WTC11 (cell line): ENCODE measurements at regions of chr11 and their contacts with region 1.

Region 1: DNA sequence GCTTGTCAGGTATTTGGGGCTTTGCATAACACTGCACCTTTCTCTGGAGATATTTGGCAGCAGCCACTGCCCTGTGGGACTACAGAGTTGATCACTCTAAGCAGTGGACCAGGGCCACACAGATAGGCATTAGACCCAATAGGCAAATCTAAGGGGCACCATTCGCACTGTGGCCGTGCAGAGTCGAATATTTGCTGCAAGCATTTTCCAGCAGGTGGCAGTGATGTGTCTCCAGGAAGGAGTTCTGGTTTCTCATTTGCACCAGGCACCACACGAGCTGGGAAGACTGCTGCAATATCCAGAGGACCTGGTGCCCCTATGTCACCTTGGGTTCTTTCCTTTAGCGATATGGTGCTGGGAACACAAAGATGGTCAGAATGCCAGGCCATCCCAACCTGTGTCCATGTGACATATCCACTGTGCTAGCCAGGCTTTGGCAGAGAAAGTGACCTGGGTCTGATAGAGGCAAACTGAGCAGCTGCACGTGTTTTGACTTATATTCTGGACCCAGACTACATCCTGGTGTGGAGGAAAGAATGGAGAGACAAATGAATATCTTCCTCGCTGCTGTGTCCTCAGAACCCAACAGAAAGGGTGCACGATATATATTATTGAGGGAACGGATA is 318.7 kb downstream of the BUD13 start:
- DNase-seq: peak; percentile 76
- ATAC-seq: peak; percentile 79
- H3K4me3 Mint-ChIP-seq: no peak overlapping the region
- H3K27ac Mint-ChIP-seq: no peak overlapping the region
- H3K4me1 Mint-ChIP-seq: peaks cover 51% of the 10 kb centered on the region
- H3K27me3 Mint-ChIP-seq: peaks cover 14% of the 10 kb centered on the region
- CTCF ChIP-seq: no peak; the same call in 1 of the 2 replicates

Region 2: DNA sequence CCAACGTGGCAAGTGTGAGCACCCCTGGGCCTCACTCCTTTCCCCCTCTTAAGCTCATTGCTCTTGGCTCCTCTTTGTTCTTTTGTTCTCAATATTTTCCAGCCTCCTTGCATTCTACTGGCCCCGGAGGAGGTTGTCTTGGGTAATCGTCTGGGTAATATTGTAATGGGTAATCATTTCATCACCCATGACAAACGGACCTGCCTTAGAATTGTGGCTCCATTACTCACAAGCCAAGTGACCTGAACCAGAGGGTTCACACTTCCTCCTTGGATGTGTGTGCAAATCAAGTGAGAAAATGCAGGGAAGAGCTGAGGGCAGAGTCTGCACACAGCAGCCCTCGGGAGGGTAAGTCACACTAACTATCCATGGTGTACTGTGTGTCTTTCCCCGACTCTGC is 13.7 kb after region 1 on chr11:
- CTCF ChIA-PET with region 1: interaction called, 14 read pairs
- POLR2A ChIA-PET with region 1: no interaction called
- DNase-seq: no peak
- ATAC-seq: no peak
- H3K4me3 Mint-ChIP-seq: no peak overlapping the region
- H3K27ac Mint-ChIP-seq: no peak overlapping the region
- H3K4me1 Mint-ChIP-seq: peaks cover 15% of the 10 kb centered on the region
- H3K27me3 Mint-ChIP-seq: peaks cover 34% of the 10 kb centered on the region
- CTCF ChIP-seq: no peak